SK-N-SH (cell line): ENCODE measurements at regions of chr11 and their contacts with region 1.

Region 1: GRCh38 chr11:126480410-126481302 is 125.2 kb downstream of the ST3GAL4 start:
- DNase-seq: peak; percentile 88
- H3K4me3 ChIP-seq: no peak overlapping the region
- H3K27ac ChIP-seq: peak overlapping the region; percentile 37 to 58; a peak in 3 of 4 replicates
- H3K4me1 ChIP-seq: peaks cover 0 to 5% of the 10 kb centered on the region in 2 experiments; a peak in 1 of 4 replicates
- H3K27me3 ChIP-seq: no peaks in the 10 kb centered on the region
- CTCF ChIP-seq: peak; percentile 93
- EP300 ChIP-seq: no peak
- RAD21 ChIP-seq: peak; percentile 83

Region 2: DNA sequence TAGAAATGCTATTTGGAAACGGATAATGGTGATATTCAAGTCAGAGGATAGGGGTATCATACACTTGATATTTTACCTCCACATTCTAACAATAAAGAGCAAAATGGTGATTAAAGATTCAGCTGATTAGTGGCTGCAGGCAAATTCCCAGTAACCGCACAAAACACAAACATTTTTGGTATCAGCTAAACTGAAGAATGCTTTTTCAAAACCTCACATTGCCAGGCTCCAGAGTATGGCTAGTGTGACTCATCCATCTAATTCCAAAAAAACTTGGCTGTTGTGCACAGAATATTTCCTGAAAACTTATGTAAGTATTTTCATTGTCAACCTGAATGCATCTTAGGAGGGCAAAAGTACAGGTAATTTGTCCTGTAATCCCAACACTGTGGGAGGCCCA is 222.9 kb before region 1 on chr11:
- CTCF ChIA-PET with region 1: no interaction called
- POLR2A ChIA-PET with region 1: no interaction called
- DNase-seq: no peak
- H3K4me3 ChIP-seq: no peak overlapping the region
- H3K27ac ChIP-seq: peak overlapping the region; percentile 7 to 16; a peak in 2 of 4 replicates
- H3K4me1 ChIP-seq: peaks cover 3 to 8% of the 10 kb centered on the region in 2 experiments; a peak in 3 of 4 replicates
- H3K27me3 ChIP-seq: no peaks in the 10 kb centered on the region
- CTCF ChIP-seq: no peak
- EP300 ChIP-seq: no peak
- RAD21 ChIP-seq: no peak

Region 3: GRCh38 chr11:126303623-126304456 is 176.8 kb before region 1 on chr11 and contains the start of gene DCPS:
- CTCF ChIA-PET with region 1: interaction called, 172 read pairs
- POLR2A ChIA-PET with region 1: no interaction called
- DNase-seq: peak; percentile 98
- H3K4me3 ChIP-seq: peak within 1 kb of the TSS; percentile 63 to 72
- H3K27ac ChIP-seq: peak within 1 kb of the TSS; percentile 92 to 94
- H3K4me1 ChIP-seq: peaks cover 0 to 9% of the 10 kb centered on the region in 2 experiments; a peak in 2 of 4 replicates
- H3K27me3 ChIP-seq: no peaks in the 10 kb centered on the region
- CTCF ChIP-seq: no peak
- EP300 ChIP-seq: no peak; a peak in 1 of 4 replicates
- RAD21 ChIP-seq: no peak
- polyA plus RNA-seq, gene DCPS: 35.5 and 48.1 TPM in 2 replicates

Region 4: DNA sequence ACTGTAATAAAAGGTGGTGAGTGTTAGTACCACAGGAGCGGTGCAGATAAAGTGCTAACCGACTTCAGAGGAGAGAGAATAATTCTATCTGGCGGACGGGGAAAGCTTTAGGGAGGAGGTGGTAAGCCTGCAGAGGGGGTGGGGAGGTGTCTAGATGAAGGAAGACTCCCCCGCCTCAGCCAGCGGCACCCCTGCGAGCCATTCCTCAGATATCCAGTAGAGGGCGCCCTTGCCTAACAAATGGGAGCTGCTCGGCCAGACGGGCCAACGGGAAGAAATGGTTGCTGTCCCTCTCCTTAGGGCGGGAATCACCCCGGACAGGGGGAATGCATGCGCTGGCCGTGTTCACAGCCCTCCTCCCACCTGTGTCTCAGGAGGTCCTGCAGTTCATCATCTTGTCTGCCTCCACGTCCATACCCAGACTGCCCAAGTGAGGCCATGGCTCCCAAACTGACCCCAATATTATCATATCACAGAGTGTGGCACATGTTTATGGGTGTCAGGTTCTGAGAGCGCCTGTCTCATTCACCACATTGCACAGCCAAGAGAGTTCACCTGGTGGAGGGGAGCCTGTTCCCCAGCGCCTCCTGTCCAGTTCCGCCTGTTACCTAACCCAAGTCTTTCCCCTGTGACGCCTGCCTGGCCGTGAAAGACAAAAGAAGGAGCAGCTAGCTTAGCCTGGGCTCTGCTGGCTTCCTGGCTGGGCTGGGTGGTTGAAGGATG is 39.7 kb before region 1 on chr11:
- CTCF ChIA-PET with region 1: interaction called, 153 read pairs
- POLR2A ChIA-PET with region 1: interaction called, 9 read pairs
- DNase-seq: peak; percentile 94
- H3K4me3 ChIP-seq: no peak overlapping the region; a peak in 1 of 4 replicates
- H3K27ac ChIP-seq: no peak overlapping the region
- H3K4me1 ChIP-seq: peaks cover 0 to 20% of the 10 kb centered on the region in 2 experiments; a peak in 1 of 4 replicates
- H3K27me3 ChIP-seq: no peaks in the 10 kb centered on the region
- CTCF ChIP-seq: peak; percentile 95
- EP300 ChIP-seq: no peak
- RAD21 ChIP-seq: peak; percentile 96

Region 5: DNA sequence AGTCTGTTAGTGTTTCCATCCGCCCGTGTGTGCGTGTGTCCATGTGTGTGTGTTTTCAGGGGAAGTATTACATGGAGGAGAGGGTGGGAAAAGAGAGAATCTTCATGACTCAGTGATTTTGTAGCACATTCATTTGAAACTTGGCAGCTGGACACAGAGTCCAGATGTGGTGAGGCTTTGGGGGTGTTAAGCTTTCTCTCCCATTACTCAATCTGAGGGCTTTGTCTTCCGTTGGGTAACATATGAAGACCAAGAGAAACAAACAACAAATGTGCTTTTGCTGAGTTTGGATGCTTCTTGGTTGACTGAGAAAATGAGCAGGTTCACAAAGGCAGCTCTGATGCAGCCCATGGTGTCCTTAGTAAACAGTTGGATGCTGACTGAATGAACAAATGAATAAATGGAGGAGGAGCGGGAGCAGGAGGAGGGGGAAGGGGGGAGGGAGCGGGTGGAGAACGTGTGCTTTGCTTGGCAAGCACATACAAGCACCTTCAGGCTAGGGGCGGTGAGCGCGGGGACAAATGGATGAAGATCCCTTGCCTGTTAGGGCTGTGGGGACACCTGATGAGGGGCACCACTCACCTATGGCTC is 20.9 kb before region 1 on chr11:
- CTCF ChIA-PET with region 1: interaction called, 78 read pairs
- POLR2A ChIA-PET with region 1: interaction called, 3 read pairs
- DNase-seq: no peak
- H3K4me3 ChIP-seq: no peak overlapping the region
- H3K27ac ChIP-seq: no peak overlapping the region
- H3K4me1 ChIP-seq: peaks cover 0 to 42% of the 10 kb centered on the region in 2 experiments; a peak in 1 of 4 replicates
- H3K27me3 ChIP-seq: no peaks in the 10 kb centered on the region
- CTCF ChIP-seq: no peak
- EP300 ChIP-seq: no peak
- RAD21 ChIP-seq: no peak

Region 6: DNA sequence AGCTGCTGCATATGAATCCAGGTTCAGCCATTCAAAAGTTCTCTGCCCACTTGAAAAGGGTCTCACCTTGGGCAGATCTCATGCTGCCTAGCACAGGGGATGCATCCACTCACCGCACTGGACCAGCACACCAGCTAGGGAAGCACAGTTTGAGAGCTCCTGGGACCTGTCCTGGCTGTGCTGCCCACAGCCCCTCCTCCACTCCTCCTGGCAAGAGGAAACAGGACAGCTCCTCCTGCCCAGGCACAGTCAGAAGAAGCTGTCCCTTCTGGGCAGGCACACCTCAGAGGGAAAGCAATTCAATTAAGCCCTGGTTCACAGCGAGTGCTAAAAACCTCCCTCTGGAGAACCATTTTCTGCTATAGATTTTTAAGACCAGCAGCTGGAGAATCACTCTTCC is 21.5 kb after region 1 on chr11:
- CTCF ChIA-PET with region 1: interaction called, 21 read pairs
- POLR2A ChIA-PET with region 1: interaction called, 3 read pairs
- DNase-seq: no peak
- H3K4me3 ChIP-seq: no peak overlapping the region
- H3K27ac ChIP-seq: peak overlapping the region in 1 of 2 experiments; percentile 66; a peak in 2 of 4 replicates
- H3K4me1 ChIP-seq: peaks cover 0 to 30% of the 10 kb centered on the region in 2 experiments; a peak in 2 of 4 replicates
- H3K27me3 ChIP-seq: no peaks in the 10 kb centered on the region
- CTCF ChIP-seq: no peak
- EP300 ChIP-seq: no peak
- RAD21 ChIP-seq: no peak

Region 7: DNA sequence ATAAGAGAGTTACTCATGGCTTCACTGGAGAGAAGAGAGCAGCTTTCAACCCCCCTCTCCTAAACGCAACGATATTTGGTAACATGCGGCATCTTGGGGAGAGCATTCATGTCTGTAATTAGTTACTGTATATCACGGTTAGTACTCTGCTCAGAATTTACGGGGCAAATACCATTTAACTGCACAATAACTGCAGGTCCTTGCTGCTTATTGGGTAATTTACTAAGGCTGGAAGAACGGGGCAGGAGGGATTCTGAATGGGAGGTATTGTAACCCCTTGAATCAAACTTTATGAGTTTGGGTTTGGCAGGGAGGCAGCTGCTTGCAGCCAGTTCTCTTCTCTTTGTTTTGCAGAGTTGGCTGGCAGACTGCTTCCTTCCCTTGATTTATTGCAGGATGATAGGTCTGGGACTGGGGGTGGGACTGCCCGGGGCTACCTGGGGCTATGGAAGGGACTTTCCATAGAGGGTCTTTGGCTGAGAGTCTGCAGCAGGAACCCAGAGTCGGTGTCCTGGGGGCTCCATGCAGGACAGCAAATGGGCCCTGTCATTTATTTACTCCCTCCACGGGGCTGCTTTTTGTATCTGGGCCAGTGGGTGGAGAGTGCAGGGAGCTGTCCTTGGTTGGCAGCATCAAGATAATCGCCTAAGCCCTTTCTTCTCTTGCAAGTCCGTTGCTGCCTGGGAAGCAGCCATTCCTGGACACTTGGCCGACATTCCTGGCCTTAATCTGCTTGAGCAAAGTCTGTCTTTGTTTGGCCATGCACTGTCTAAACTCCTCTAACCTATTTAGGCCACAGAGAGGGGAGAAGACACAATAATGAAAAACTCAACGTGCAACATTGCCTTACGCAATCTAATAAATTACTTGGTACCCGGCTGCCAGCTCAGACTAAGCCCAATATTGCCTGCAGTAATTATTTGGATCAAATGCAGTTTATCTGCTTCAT is 63.7 kb after region 1 on chr11:
- CTCF ChIA-PET with region 1: interaction called, 12 read pairs
- POLR2A ChIA-PET with region 1: interaction called, 3 read pairs
- DNase-seq: peak; percentile 73
- H3K4me3 ChIP-seq: no peak overlapping the region
- H3K27ac ChIP-seq: peak overlapping the region in 1 of 2 experiments; percentile 96; a peak in 2 of 4 replicates
- H3K4me1 ChIP-seq: peaks cover 5 to 48% of the 10 kb centered on the region in 2 experiments; a peak in 3 of 4 replicates
- H3K27me3 ChIP-seq: no peaks in the 10 kb centered on the region
- CTCF ChIP-seq: no peak
- EP300 ChIP-seq: 0 out of 4 replicates have a peak, but pooled peaks of 1 of the 2 experiments have one; percentile 20
- RAD21 ChIP-seq: no peak

Region 8: GRCh38 chr11:126989942-126990715 is 509.5 kb after region 1 on chr11:
- CTCF ChIA-PET with region 1: interaction called, 26 read pairs
- POLR2A ChIA-PET with region 1: no interaction called
- DNase-seq: peak; percentile 88
- H3K4me3 ChIP-seq: peak overlapping the region; percentile 21 to 45; a peak in 3 of 4 replicates
- H3K27ac ChIP-seq: peak overlapping the region in 1 of 2 experiments; percentile 99; a peak in 2 of 4 replicates
- H3K4me1 ChIP-seq: peaks cover 2 to 33% of the 10 kb centered on the region in 2 experiments; a peak in 3 of 4 replicates
- H3K27me3 ChIP-seq: no peaks in the 10 kb centered on the region
- CTCF ChIP-seq: peak; percentile 97
- EP300 ChIP-seq: no peak
- RAD21 ChIP-seq: peak; percentile 93